Mammary epithelial cell (primary cell): ENCODE measurements at regions of chr3 and their contacts with region 1.

Region 1: GRCh38 chr3:141796081-141796888 is 33.1 kb downstream of the GRK7 start:
- DNase-seq: no peak
- H3K4me3 ChIP-seq: no peak overlapping the region
- H3K27ac ChIP-seq: no peak overlapping the region
- H3K4me1 ChIP-seq: no peaks in the 10 kb centered on the region
- H3K27me3 ChIP-seq: no peaks in the 10 kb centered on the region
- CTCF ChIP-seq: no peak

Region 2: DNA sequence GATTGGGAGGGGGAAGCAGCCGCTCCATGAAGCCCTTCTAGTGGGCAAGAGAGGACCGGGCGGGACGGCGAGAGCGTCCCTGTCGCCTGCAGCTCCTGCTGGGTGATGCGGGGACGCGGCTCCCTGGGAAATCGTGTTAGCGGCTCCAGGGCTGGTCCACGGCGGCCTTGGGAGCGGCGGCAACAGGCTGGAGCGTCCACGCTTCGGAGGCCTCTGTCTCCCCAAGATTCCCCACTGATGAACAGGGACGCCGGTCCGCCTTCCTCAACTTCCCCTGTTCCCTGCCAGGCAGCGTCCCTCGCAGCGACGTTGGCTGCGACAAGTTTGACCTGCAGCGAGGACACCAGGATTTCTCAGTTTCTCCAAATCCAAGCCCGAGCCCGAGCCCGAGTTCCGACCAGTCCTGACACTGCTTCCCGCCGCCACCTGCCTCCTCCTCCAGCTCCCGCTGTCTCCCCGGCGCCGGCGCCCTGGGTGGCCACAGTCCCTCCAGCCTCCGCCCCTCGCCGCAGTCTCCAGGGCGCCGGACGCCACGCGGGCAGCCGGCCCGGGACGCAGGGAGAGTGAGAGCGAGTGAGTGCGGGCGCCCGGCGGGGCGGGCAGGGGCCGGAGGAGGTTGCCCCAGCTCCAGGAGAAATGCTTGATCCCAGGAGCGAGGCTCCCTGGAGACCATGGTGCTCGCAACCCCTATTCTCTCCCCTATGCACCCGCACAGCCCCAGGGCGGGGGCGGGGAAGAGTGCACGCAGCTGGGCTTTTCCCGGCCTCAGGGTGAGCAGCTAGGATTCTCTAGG is 136.3 kb before region 1 on chr3:
- CTCF ChIA-PET with region 1: no interaction called
- dilution Hi-C with region 1: loop called (anchors 10 kb)
- in situ Hi-C with region 1: no loop called
- intact Hi-C with region 1: no loop called
- DNase-seq: peak; percentile 37
- H3K4me3 ChIP-seq: peak overlapping the region; percentile 43 to 63 (median 48)
- H3K27ac ChIP-seq: no peak overlapping the region
- H3K4me1 ChIP-seq: peaks cover 12% of the 10 kb centered on the region
- H3K27me3 ChIP-seq: peaks cover 6% of the 10 kb centered on the region
- CTCF ChIP-seq: no peak

Region 3: DNA sequence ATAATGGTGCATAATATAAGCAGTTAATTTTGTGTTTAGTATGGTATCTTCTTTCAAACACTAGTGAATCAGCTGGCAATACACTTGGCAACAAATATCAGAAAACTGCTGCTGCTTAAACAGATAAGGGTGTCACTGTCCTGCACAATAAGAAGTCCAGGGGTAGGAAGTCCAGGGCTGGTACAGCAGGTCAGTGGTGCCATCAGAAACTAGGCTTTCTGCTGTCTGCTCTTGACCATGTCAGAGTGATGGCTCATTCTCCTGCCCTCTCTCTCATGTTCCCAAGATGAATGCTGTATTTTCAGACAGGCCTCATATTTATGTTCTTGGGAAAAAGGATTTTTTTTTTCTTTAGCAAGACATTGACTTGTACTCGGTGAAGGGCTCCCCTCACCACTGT is 42.3 kb before region 1 on chr3:
- CTCF ChIA-PET with region 1: no interaction called
- dilution Hi-C with region 1: loop called (anchors 5 kb)
- in situ Hi-C with region 1: no loop called
- intact Hi-C with region 1: no loop called
- DNase-seq: no peak
- H3K4me3 ChIP-seq: no peak overlapping the region
- H3K27ac ChIP-seq: no peak overlapping the region
- H3K4me1 ChIP-seq: no peaks in the 10 kb centered on the region
- H3K27me3 ChIP-seq: no peaks in the 10 kb centered on the region
- CTCF ChIP-seq: no peak